Head of caudate nucleus (tissue), 42 donors: ENCODE measurements at regions of chr3 and their contacts with region 1.

Region 1: GRCh38 chr3:62332835-62333244 is 40.5 kb downstream of the FEZF2 start:
- DNase-seq: peak in 13 of 42 donors; percentile 8 to 60 (median 24)

Region 2: GRCh38 chr3:62558549-62559112 is 225.8 kb after region 1 on chr3:
- intact Hi-C with region 1: loop called (anchors 10 kb)
- DNase-seq: peak in 5 of 42 donors; percentile 6 to 15 (median 13)